Spleen (tissue), 13 donors: ENCODE measurements at regions of chr20 and their contacts with region 1.

Region 1: GRCh38 chr20:52312132-52312729 is 120.7 kb upstream of the ZFP64 start:
- DNase-seq: no peak
- H3K4me3 ChIP-seq: no peak overlapping the region
- H3K27ac ChIP-seq: no peak overlapping the region
- H3K4me1 ChIP-seq: peaks cover 0 to 10% (median 4%) of the 10 kb centered on the region in 6 donors
- H3K27me3 ChIP-seq: no peaks in the 10 kb centered on the region
- CTCF ChIP-seq: peak; percentile 12 to 75 (median 59)
- POLR2A ChIP-seq: no peak

Region 2: GRCh38 chr20:52039790-52040189 is 272.4 kb before region 1 on chr20:
- intact Hi-C with region 1: no loop called
- DNase-seq: no peak
- H3K4me3 ChIP-seq: no peak overlapping the region
- H3K27ac ChIP-seq: no peak overlapping the region
- H3K4me1 ChIP-seq: no peaks in the 10 kb centered on the region
- H3K27me3 ChIP-seq: no peaks in the 10 kb centered on the region
- CTCF ChIP-seq: no peak
- POLR2A ChIP-seq: no peak

Region 3: DNA sequence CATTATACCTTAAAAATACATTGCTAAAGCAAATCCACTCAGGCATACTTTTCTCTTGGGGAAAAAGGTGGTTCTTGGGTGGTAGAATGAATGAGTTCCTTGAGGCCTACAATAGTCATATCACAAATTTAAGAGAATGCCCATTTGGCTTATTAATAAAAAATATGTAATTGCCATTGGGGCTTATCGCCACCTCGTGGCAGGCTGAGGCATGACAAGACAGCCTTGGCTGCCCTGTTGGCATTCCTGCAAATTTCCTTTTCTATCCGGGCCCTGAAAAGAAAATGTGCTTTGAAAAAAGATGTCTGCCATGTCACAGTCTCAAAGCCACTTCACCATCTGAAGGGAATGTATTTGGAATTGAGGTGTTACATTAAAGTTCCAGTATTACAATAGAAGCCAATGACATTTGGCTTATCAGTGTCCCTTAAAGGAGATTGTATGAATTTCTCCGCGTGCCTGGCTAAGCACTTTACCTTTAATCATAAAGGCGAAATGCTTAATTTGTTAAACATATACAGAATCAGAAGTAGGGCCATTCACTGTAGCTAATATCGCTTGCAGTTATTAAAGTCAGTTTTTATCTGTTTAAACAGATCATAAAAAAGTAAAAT is 67.6 kb after region 1 on chr20:
- intact Hi-C with region 1: loop called (anchors 2 kb)
- DNase-seq: peak; percentile 68
- H3K4me3 ChIP-seq: no peak overlapping the region
- H3K27ac ChIP-seq: no peak overlapping the region
- H3K4me1 ChIP-seq: no peaks in the 10 kb centered on the region
- H3K27me3 ChIP-seq: no peaks in the 10 kb centered on the region
- CTCF ChIP-seq: peak; percentile 57 to 93 (median 85)
- POLR2A ChIP-seq: no peak

Region 4: DNA sequence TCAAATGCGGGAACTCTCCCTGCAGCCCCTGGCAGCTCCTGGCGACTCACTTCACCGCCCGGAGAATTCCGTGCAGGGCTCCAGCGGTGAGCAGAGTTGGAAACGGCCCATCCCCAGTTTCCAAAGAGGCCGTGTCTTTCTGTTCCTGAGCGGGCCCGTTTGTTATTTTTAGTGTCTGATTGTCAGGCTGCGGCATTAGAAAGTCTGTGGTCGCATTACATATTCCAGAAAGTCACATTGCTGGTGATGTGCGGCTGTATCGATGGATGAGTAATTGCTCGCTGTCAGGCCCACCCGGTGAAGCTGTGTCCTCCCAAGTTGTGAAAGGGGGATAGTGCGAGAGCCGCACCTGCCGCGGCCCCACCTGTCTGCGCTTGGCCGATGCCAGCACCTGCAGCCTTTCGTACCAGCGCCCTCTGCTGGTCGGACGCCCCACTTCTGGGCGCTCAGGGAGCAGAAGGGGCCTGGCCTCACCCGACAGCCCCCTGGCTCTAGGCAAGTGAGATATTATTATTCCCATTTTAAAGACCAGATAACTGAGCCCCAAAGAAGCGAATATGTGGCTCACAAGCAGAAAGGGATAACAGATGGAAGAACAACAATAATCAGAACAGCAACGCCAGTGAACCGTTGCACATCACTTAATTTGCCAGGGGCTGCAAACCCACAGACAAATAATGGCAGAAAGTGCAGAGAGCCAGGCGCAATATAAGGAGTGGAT is 904.8 kb after region 1 on chr20:
- intact Hi-C with region 1: loop called (anchors 5 kb)
- DNase-seq: peak; percentile 93
- H3K4me3 ChIP-seq: peak overlapping the region in 1 of 8 donors; percentile 44
- H3K27ac ChIP-seq: no peak overlapping the region
- H3K4me1 ChIP-seq: peaks cover 0 to 12% (median 10%) of the 10 kb centered on the region in 6 donors
- H3K27me3 ChIP-seq: peaks cover 0 to 17% (median 0%) of the 10 kb centered on the region in 7 donors
- CTCF ChIP-seq: peak; percentile 43 to 92 (median 86)
- POLR2A ChIP-seq: no peak